Psoas muscle (tissue), 8 donors: ENCODE measurements at regions of chr1 and their contacts with region 1.

Region 1: DNA sequence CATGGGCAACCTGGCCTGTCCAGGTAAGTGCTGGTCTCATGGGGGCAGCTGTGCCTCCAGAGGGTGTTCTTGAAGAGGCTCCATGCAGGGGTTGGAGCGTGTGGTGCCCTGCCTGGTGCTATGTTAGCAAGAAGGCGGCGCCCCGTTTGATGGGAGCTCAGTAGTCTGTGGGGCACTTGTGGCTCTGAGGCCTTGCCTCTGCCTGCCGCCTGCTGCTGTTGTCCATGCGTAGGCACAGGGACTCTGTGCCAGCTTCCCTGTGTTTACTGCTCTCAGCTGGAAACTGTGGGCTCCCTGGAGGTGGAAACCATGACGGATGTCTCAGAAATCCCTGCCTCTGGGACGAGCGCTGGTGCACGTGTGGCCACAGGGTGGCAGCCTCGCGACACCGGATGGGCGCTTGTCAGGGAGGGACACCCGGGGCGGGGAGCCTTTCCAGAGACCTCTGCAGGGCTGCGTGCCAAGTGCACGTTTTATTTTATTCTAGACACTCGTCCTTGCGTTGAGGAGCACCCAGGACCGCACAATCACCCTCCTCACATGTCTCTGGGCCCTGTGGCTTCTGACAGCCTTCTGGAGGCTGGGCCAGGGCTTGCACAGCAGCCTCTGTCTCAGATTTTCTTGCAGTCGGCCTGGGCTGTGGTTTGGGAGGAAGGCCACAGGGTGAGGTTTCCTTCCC is 27.1 kb downstream of the SNAP47 start:
- DNase-seq: peak; percentile 88 to 92
- ATAC-seq: peak; percentile 71 to 82 (median 79)
- H3K4me3 ChIP-seq: peak overlapping the region; percentile 22
- H3K27ac ChIP-seq: peak overlapping the region; percentile 90
- H3K4me1 ChIP-seq: peaks cover 62% of the 10 kb centered on the region
- H3K27me3 ChIP-seq: no peaks in the 10 kb centered on the region
- CTCF ChIP-seq: peak; percentile 89

Region 2: DNA sequence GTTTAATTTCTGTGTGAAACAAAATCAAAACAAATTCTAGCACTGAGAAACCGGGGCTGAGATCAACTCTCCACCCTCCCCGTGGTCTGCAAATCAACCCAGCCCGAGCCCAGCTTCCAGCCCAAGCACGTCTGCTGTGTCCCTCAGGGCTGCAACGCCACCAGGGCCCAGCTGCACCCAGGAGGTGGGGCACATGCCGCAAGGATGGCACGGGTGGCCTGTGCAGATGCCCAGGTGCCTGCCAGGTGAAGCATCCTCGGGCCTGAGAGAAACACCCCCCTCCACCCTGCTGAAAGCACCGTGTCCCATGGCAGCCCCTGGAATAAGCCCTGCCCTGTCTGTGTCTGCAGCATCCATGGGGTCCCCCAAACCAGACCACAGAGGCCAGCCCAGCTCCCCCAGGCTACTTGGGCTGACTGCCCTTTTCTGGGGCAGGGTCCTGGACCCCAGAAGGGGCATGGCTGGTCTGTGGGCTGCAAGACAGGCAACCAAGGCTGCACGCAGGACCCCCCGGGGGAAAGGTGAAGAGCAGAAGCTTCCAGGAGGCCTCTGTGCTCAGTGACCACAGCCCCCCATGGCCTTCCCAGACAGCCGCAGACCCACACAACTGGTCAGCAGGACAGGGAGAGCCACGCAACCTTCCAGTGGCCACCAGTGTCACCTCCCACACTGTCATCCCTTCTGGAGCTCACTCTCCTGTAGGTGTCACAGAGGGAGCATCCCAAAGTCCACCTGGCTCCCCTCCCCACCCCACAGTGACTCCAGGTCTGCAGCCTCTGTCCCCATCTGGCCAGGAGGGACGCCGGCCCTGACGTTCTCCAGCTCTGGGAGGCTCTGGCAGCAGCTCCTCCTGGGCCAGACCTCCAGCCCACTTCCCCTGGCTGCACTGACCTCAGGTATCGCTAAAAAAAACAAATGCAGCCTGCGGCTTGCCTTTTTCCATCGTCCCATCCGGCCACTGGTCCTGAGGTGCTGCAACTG is 177.7 kb after region 1 on chr1:
- intact Hi-C with region 1: loop called in 1 of 2 experiments (anchors 1 kb)
- DNase-seq: no peak
- ATAC-seq: no peak
- H3K4me3 ChIP-seq: peak overlapping the region; percentile 80
- H3K27ac ChIP-seq: peak overlapping the region; percentile 89
- H3K4me1 ChIP-seq: peaks cover 63% of the 10 kb centered on the region
- H3K27me3 ChIP-seq: no peaks in the 10 kb centered on the region
- CTCF ChIP-seq: no peak

Region 3: DNA sequence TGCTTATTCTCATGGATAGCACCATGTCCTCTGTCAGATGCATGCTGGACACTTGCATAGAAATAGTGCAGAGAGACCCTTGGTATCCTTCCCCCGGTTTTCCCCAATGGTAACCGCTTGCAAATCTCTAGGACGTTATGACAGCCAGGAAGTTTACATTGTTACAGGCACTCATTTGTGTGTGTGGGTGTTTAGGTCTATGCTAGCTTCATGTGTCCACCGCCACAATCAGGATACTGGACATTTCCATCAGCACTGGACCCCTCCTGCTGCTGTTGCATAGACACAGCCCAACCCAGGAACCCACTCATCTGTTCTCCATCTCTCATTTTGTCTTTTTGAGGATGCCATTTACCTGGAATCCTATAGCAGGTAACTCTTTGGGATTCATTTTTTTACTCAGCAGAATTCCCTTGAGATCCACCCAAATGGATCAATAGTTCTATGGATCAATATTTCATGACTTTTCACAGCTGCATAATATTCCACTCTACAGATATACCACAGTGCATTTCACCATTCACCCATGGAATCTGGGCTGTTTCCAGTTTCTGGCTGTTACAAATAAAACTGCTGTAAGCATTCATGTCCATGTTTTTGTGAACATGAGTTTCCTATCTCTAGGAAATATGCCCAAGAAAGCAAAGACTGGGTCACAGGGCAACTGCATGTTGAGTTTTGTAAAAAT is 191.9 kb after region 1 on chr1:
- intact Hi-C with region 1: loop called in 1 of 2 experiments (anchors 2 kb)
- DNase-seq: no peak
- ATAC-seq: no peak
- H3K4me3 ChIP-seq: no peak overlapping the region
- H3K27ac ChIP-seq: no peak overlapping the region
- H3K4me1 ChIP-seq: no peaks in the 10 kb centered on the region
- H3K27me3 ChIP-seq: peaks cover 0 to 5% (median 4%) of the 10 kb centered on the region in 3 donors
- CTCF ChIP-seq: no peak

Region 4: GRCh38 chr1:228073857-228074545 is 311.6 kb after region 1 on chr1:
- intact Hi-C with region 1: loop called in 1 of 2 experiments (anchors 10 kb)
- DNase-seq: no peak
- ATAC-seq: peak; percentile 38 to 54 (median 52)
- H3K4me3 ChIP-seq: no peak overlapping the region
- H3K27ac ChIP-seq: no peak overlapping the region
- H3K4me1 ChIP-seq: no peaks in the 10 kb centered on the region
- H3K27me3 ChIP-seq: peaks cover 0 to 27% (median 11%) of the 10 kb centered on the region in 3 donors
- CTCF ChIP-seq: peak; percentile 27